IMR-90 (cell line): ENCODE measurements at regions of chr7 and their contacts with region 1.

Region 1: GRCh38 chr7:116499168-116500077 is at the start of gene CAV2:
- DNase-seq: peak; percentile 48
- ATAC-seq: peak; percentile 91
- H3K4me3 ChIP-seq: peak within 1 kb of the TSS; percentile 88
- H3K27ac ChIP-seq: peak within 1 kb of the TSS; percentile 94
- H3K4me1 ChIP-seq: peaks cover 15% of the 10 kb centered on the region
- H3K27me3 ChIP-seq: no peaks in the 10 kb centered on the region
- CTCF ChIP-seq: no peak
- POLR2A ChIP-seq: no peak; the same call in 1 of the 2 replicates
- RAD21 ChIP-seq: no peak
- total RNA-seq, gene CAV2: 199 and 217 TPM in 2 replicates

Region 2: DNA sequence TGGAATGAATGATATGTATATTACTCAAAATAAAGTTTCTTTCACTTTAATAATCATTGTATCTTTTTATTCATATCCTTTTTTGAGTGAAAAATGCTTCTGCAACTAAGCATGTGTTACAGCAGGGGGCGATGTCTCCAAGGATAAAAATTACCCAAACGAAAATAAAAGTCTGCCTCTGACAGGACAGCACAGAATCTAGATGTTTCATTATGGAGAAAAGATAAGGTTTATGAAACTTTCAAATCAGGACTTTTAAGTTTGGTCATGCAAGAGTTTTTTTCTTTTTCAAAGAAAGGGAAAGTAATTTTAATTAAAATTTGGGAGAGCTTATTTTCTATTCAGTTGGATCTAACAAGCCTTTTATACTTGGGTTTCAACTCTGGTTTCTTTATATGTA is 240.7 kb before region 1 on chr7:
- CTCF ChIA-PET with region 1: no interaction called
- POLR2A ChIA-PET with region 1: interaction called, 7 read pairs
- dilution Hi-C with region 1: loop called (anchors 25 kb)
- in situ Hi-C with region 1: no loop called
- intact Hi-C with region 1: loop called (anchors 1 kb)
- DNase-seq: peak; percentile 79
- ATAC-seq: peak; percentile 75
- H3K4me3 ChIP-seq: no peak overlapping the region
- H3K27ac ChIP-seq: peak overlapping the region; percentile 49; the same call in 1 of the 2 replicates
- H3K4me1 ChIP-seq: peaks cover 11% of the 10 kb centered on the region; the same call in 1 of the 2 replicates
- H3K27me3 ChIP-seq: no peaks in the 10 kb centered on the region
- CTCF ChIP-seq: peak; percentile 91
- POLR2A ChIP-seq: 0 out of 2 replicates have a peak, but pooled peaks have one; percentile 39
- RAD21 ChIP-seq: peak; percentile 95

Region 3: GRCh38 chr7:116316833-116317612 is 182.4 kb before region 1 on chr7:
- CTCF ChIA-PET with region 1: no interaction called
- POLR2A ChIA-PET with region 1: no interaction called
- dilution Hi-C with region 1: no loop called
- in situ Hi-C with region 1: no loop called
- intact Hi-C with region 1: loop called (anchors 5 kb)
- DNase-seq: peak; percentile 99
- ATAC-seq: peak; percentile 86
- H3K4me3 ChIP-seq: no peak overlapping the region
- H3K27ac ChIP-seq: peak overlapping the region; percentile 62
- H3K4me1 ChIP-seq: peaks cover 11% of the 10 kb centered on the region
- H3K27me3 ChIP-seq: no peaks in the 10 kb centered on the region
- CTCF ChIP-seq: no peak
- POLR2A ChIP-seq: peak; percentile 41; the same call in 1 of the 2 replicates
- RAD21 ChIP-seq: 0 out of 2 replicates have a peak, but pooled peaks have one; percentile 17

Region 4: DNA sequence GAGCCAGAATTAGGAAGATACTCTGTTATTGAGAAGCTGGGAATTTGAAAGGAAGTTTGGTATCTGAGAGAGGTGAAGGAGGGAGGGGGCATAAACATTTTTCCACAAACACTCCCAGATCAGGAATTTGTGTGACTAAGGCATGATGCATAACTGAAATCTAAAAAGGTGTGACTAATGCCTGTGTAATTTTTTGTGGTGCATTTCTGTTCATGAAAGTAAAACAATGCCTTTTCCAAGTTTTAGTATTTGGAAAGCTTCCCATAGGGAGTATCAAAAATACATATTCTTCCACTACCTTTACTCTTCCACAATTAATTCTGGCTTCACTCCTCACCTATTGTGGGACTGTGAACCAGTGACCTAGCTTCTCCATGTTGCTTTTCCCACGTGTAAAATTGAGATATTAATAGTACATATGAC is 56.3 kb before region 1 on chr7:
- CTCF ChIA-PET with region 1: no interaction called
- POLR2A ChIA-PET with region 1: no interaction called
- dilution Hi-C with region 1: no loop called
- in situ Hi-C with region 1: no loop called
- intact Hi-C with region 1: loop called (anchors 10 kb)
- DNase-seq: peak; percentile 97
- ATAC-seq: peak; percentile 76
- H3K4me3 ChIP-seq: no peak overlapping the region
- H3K27ac ChIP-seq: 0 out of 2 replicates have a peak overlapping the region, but pooled peaks have one; percentile 87
- H3K4me1 ChIP-seq: peaks cover 14% of the 10 kb centered on the region
- H3K27me3 ChIP-seq: no peaks in the 10 kb centered on the region
- CTCF ChIP-seq: no peak
- POLR2A ChIP-seq: no peak
- RAD21 ChIP-seq: no peak